ENCODE measurements at regions of chr2 and their contacts with region 1.

Region 1: DNA sequence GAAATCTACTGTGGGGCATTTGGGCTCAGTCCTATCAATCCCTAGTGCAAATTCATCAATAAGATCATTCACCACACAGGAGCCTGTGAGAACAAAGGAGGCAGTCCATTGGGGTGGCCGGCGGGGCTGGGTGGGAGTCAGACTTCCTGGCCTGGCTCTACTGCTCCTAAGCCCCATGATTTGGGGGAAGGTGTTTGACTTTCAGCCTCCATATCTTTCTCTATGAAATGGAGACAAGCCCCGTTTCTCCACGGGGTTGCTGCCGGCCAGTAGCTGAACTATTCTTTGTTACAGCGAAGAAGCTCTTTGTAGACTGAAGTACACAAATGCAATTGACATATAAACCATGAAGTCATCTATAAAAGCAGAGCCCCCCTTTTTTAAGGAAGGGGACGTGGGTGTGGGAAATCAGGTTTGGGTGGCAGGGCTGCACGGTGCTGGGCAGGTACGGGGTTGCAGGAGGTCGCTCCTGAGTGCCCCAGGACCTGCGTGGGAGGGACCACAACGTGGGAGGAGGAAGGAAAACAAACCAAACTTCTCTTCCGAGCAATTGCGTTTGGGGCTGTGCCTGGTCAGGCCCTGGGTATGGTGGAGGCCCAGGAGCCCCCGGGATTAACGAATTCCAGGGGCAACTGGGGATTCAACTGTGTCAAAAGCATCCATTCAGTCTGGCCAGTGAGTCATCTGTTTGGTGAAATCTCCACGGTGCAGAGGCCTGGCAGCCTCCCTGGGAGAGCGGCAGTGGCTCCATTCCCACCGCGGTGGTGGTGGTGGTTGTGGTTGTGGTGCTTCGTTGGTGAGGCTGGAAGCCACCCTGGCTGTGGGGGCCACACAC is 18.2 kb downstream of the FBLN7 start:
- DNase-seq: peak in 7 of 9 experiments; percentile 26 to 59 (median 41)
- ATAC-seq: peak; percentile 8
- H3K4me3 ChIP-seq: peak overlapping the region; percentile 0 to 29
- H3K4me3 Mint-ChIP-seq: peak overlapping the region; percentile 74
- H3K27ac ChIP-seq: peak overlapping the region in 1 of 2 experiments; percentile 14
- H3K27ac Mint-ChIP-seq: peak overlapping the region; percentile 89
- H3K4me1 ChIP-seq: peaks cover 25% of the 10 kb centered on the region
- H3K4me1 Mint-ChIP-seq: peaks cover 26% of the 10 kb centered on the region
- H3K27me3 ChIP-seq: no peaks in the 10 kb centered on the region
- H3K27me3 Mint-ChIP-seq: no peaks in the 10 kb centered on the region
- CTCF ChIP-seq: no peak

Region 2: DNA sequence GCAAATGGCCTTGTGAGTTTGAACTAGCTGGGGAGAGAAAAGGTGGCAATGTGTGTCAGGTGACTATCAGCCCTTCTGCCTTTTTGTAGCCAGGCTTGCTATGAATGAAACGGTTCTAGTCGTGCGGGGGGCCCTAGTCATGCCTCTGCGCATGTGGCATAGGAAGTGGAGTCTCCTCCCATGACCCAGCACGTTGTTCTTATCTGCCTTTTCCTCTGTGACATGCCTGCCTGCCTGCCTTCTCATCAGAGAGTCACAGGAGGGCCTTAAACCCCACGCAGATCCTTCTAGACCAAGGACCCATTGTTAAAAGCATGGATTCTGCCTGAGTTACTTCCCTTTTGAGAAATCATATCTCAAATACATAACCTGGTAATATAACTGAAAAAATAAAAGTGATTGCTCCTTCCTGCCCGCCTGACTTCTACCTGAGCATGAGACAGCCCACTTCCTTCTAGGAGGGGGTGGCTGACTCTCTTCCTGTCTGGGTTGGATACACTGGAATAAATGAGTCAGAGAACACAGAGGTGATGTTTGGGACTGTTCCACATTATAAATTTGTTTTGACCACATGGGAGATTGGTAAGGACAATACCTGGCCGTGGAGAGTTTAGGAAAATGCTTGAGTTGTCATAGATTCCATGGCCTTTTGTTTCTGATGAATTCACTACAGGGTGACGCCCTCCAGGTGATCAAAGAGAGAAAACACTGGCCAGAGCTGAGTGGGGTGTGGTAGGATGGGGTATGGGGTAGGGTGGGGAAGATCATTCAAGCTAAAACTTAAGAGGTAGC is 31.6 kb after region 1 on chr2:
- CTCF ChIA-PET with region 1: no interaction called
- POLR2A ChIA-PET with region 1: interaction called, 3 read pairs
- intact Hi-C with region 1: loop called (anchors 1 to 2 kb)
- DNase-seq: peak; percentile 30 to 85 (median 77)
- ATAC-seq: peak; percentile 82
- H3K4me3 ChIP-seq: peak overlapping the region; percentile 16 to 23
- H3K4me3 Mint-ChIP-seq: peak overlapping the region; percentile 59
- H3K27ac ChIP-seq: peak overlapping the region; percentile 72 to 94
- H3K27ac Mint-ChIP-seq: peak overlapping the region; percentile 100
- H3K4me1 ChIP-seq: peaks cover 31% of the 10 kb centered on the region
- H3K4me1 Mint-ChIP-seq: peaks cover 63% of the 10 kb centered on the region
- H3K27me3 ChIP-seq: no peaks in the 10 kb centered on the region
- H3K27me3 Mint-ChIP-seq: no peaks in the 10 kb centered on the region
- CTCF ChIP-seq: no peak

Measured in CD8-positive, alpha-beta T cell (primary cell).